ENCODE measurements at regions of chr5 and their contacts with region 1.

Region 1: GRCh38 chr5:134004592-134005375 is at the start of gene VDAC1:
- DNase-seq: peak; percentile 89
- ATAC-seq: peak; percentile 84
- H3K4me3 Mint-ChIP-seq: peak within 1 kb of the TSS; percentile 95
- H3K27ac Mint-ChIP-seq: peak within 1 kb of the TSS; percentile 95
- H3K4me1 Mint-ChIP-seq: peaks cover 33% of the 10 kb centered on the region
- H3K27me3 Mint-ChIP-seq: no peaks in the 10 kb centered on the region
- total RNA-seq, gene VDAC1: 194 to 199 TPM

Region 2: DNA sequence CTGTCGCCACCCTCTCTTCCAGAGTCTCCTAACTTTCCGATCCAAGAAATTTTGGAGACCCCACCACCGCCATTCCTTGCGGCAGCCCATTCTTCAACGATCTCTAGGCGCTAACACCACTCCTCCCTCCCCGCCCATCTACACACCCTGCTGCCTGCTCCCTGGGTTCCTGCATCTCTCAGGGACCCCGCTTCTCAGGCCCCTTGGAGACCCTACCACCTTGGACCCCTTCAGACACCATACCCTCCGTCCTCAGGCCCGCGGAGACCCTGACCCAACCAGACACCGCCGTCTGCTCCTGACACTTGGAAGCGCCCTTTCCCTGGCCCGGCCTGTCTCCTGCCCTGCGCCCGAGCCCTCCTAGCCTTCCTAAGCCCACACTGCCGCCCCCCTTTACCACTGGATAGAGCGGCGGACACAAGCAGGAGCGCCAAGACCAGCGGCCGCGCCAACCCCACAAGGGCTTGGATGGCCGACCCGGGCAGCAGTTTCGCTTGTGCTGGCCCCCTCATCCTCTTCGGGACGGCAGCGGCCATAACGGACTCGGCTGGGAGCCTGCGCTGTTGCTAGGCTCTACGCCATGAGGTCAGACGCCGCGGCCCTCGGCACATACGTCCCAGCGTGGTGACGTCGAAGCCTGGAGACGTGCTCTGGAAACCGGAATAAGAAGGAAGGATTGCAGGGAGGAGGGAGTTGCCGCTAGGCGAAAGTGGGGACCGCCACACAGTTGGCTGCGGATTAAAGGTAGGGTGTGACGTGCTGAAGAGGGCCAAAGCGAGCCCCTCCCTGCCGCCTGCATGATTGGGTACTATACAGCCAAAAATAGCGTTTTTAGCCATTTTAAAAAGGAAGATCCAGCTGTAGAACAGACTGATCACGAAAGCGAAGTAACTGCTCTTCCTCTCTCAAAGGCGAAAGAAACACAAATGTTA is 36.5 kb before region 1 on chr5 and contains the start of gene C5orf15:
- POLR2A ChIA-PET with region 1: interaction called, 12 read pairs
- DNase-seq: peak; percentile 89
- ATAC-seq: peak; percentile 97
- H3K4me3 Mint-ChIP-seq: peak within 1 kb of the TSS; percentile 95
- H3K27ac Mint-ChIP-seq: peak within 1 kb of the TSS; percentile 97
- H3K4me1 Mint-ChIP-seq: peaks cover 31% of the 10 kb centered on the region
- H3K27me3 Mint-ChIP-seq: no peaks in the 10 kb centered on the region
- total RNA-seq, gene C5orf15: 19.1 to 24.8 TPM

Region 3: DNA sequence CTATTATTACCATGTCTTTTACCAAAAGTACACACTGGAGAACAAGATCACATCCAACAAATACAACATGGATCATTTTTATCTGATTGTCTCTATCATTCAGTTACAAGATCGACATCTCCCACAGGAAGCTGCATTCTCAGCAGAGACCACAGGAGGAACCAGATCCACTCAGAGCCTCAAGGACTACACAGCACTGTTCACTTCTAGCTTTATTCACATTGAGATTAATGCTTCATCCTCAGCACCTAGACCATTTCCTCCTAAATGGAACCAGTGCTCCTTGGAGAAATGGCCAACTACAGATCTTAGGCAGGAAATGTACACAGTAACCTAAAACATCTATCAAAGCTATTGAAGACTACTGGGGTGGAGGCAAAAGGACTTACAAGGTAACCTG is 23.1 kb before region 1 on chr5:
- POLR2A ChIA-PET with region 1: no interaction called
- DNase-seq: no peak
- ATAC-seq: peak; percentile 58
- H3K4me3 Mint-ChIP-seq: no peak overlapping the region
- H3K27ac Mint-ChIP-seq: peak overlapping the region; percentile 42
- H3K4me1 Mint-ChIP-seq: peaks cover 16% of the 10 kb centered on the region
- H3K27me3 Mint-ChIP-seq: no peaks in the 10 kb centered on the region

Region 4: GRCh38 chr5:134225618-134226440 is 221.0 kb after region 1 on chr5 and contains the start of gene PPP2CA:
- POLR2A ChIA-PET with region 1: interaction called, 10 read pairs
- DNase-seq: peak; percentile 99
- ATAC-seq: peak; percentile 88
- H3K4me3 Mint-ChIP-seq: peak within 1 kb of the TSS; percentile 67
- H3K27ac Mint-ChIP-seq: peak within 1 kb of the TSS; percentile 98
- H3K4me1 Mint-ChIP-seq: peaks cover 35% of the 10 kb centered on the region
- H3K27me3 Mint-ChIP-seq: no peaks in the 10 kb centered on the region
- total RNA-seq, gene PPP2CA: 122 to 129 TPM